ENCODE measurements at regions of chr5 and their contacts with region 1.

Region 1: GRCh38 chr5:55868846-55869245 is 17.7 kb downstream of the IL31RA start:
- DNase-seq: peak; percentile 80
- H3K4me3 Mint-ChIP-seq: no peak overlapping the region
- H3K27ac Mint-ChIP-seq: no peak overlapping the region
- H3K4me1 Mint-ChIP-seq: peaks cover 28% of the 10 kb centered on the region
- H3K27me3 Mint-ChIP-seq: no peaks in the 10 kb centered on the region

Region 2: DNA sequence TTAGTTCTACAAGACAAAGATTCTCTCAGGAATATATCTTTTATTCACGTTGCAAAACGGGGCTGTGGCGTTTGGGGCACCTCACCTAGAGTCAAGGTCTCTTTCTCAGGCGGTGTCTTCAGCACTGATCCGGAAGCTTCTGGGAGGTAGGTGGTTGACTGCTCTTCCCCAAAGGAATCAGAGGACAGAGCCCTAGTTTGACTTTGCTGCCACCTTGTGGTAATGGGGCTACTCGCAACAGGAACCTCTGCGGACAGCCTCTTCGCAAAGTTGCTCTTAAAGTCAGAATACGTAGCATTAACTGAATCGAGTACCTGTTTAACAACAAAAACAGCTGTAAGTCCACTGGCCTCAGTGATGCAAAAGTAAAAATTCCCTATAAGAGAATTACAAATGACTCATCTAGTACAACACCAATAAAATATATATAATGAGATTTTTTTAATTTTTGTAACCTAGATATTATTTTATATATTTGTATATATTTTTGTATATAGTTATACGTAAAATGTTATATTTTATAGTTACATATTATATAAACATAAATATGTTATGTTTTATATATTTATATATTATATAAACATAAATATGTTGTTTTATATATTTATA is 722.2 kb before region 1 on chr5:
- CTCF ChIA-PET with region 1: no interaction called
- intact Hi-C with region 1: no loop called
- DNase-seq: peak; percentile 90
- H3K4me3 Mint-ChIP-seq: no peak overlapping the region
- H3K27ac Mint-ChIP-seq: no peak overlapping the region
- H3K4me1 Mint-ChIP-seq: peaks cover 12% of the 10 kb centered on the region
- H3K27me3 Mint-ChIP-seq: peaks cover 4% of the 10 kb centered on the region

Region 3: GRCh38 chr5:55364537-55365055 is 504.2 kb before region 1 on chr5:
- CTCF ChIA-PET with region 1: no interaction called
- intact Hi-C with region 1: loop called (anchors 5 kb)
- DNase-seq: peak; percentile 28
- H3K4me3 Mint-ChIP-seq: no peak overlapping the region
- H3K27ac Mint-ChIP-seq: peak overlapping the region; percentile 25
- H3K4me1 Mint-ChIP-seq: peaks cover 19% of the 10 kb centered on the region
- H3K27me3 Mint-ChIP-seq: no peaks in the 10 kb centered on the region

Region 4: GRCh38 chr5:55771175-55771655 is 97.6 kb before region 1 on chr5:
- CTCF ChIA-PET with region 1: no interaction called
- intact Hi-C with region 1: loop called (anchors 1 kb)
- DNase-seq: no peak
- H3K4me3 Mint-ChIP-seq: no peak overlapping the region
- H3K27ac Mint-ChIP-seq: no peak overlapping the region
- H3K4me1 Mint-ChIP-seq: peaks cover 12% of the 10 kb centered on the region
- H3K27me3 Mint-ChIP-seq: no peaks in the 10 kb centered on the region

Region 5: DNA sequence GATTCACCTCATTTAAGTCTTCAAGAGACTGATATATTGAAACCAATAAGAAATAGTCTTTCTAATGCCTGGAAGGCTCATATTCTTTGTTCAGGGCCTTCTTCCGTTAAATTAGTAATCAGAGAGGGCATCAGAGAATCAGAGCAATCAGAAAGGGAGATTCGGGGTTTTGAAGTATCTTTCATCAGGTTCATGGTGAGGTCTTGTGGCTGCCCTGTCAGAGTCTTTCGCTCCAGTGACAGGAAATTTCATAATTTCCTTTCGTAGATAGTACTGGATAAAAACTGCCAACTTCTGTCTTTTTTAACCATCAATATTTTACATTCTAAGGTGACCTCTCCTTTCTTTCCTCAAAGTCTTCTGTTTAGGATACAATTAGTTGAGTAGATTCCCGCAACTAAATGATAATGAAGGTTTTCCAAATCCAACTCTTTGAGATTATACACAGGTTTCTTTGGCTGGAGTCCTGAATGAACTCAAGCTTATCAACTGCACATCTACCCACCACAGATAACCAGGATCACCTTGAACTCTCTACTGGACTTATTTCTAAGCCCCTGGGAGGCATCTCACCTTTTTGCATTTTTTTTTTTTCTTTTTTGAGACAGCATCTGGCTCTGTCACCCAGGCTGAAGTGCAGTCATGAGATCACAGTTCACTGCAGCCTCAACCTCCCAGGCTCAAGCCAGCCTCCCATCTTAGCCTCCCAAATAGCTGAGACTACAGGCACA is 12.2 kb before region 1 on chr5:
- CTCF ChIA-PET with region 1: interaction called, 4 read pairs
- intact Hi-C with region 1: loop called (anchors 1 kb)
- DNase-seq: peak; percentile 56
- H3K4me3 Mint-ChIP-seq: no peak overlapping the region
- H3K27ac Mint-ChIP-seq: peak overlapping the region; percentile 54
- H3K4me1 Mint-ChIP-seq: peaks cover 41% of the 10 kb centered on the region
- H3K27me3 Mint-ChIP-seq: no peaks in the 10 kb centered on the region

Region 6: GRCh38 chr5:55923177-55923771 is 54.4 kb after region 1 on chr5:
- CTCF ChIA-PET with region 1: no interaction called
- intact Hi-C with region 1: loop called (anchors 5 kb)
- DNase-seq: peak; percentile 46
- H3K4me3 Mint-ChIP-seq: peak overlapping the region; percentile 78
- H3K27ac Mint-ChIP-seq: peak overlapping the region; percentile 64
- H3K4me1 Mint-ChIP-seq: peaks cover 21% of the 10 kb centered on the region
- H3K27me3 Mint-ChIP-seq: peaks cover 2% of the 10 kb centered on the region

Region 7: GRCh38 chr5:56080375-56081052 is 211.7 kb after region 1 on chr5:
- CTCF ChIA-PET with region 1: no interaction called
- intact Hi-C with region 1: loop called (anchors 2 kb)
- DNase-seq: peak; percentile 72
- H3K4me3 Mint-ChIP-seq: peak overlapping the region; percentile 5
- H3K27ac Mint-ChIP-seq: peak overlapping the region; percentile 90
- H3K4me1 Mint-ChIP-seq: peaks cover 72% of the 10 kb centered on the region
- H3K27me3 Mint-ChIP-seq: no peaks in the 10 kb centered on the region